GM23248 (cell line): ENCODE measurements at regions of chr6 and their contacts with region 1.

Region 1: DNA sequence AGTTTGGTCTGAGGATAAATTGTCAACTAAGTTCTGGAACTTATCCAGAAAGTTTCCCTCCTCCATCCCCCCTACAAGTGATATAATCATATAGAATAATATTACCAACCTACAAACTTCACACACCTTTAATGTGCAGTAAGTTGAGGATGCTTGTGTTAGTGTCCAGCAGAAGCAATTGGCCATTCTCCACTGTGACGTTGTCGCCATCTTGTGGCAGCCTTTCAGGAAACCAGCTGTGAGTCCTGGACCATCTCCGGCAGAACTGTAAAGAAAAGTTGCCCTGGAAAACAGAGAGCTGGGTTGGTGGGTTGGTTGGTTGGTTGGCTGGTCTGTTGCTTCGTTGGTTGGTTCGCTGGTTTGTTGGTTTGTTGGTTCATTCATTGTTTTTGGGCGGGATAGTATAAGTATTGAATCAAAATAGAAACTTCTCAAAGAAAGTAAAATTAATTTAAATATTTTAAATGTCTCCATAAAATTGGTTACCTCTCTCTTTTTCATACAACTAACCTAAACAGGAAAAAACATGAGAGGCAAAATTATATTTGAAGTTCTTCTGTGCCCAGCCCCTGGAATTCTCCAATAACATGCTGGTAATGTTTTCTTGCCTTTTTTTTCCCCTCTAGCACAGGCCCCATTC is 127.5 kb downstream of the PKHD1 start:
- DNase-seq: peak; percentile 71
- H3K4me3 ChIP-seq: no peak overlapping the region
- H3K27ac ChIP-seq: no peak overlapping the region
- H3K4me1 ChIP-seq: no peaks in the 10 kb centered on the region
- H3K27me3 ChIP-seq: no peaks in the 10 kb centered on the region; the same call in 1 of the 2 replicates

Region 2: GRCh38 chr6:50816115-50816675 is 1143.7 kb before region 1 on chr6:
- in situ Hi-C with region 1: loop called (anchors 10 kb)
- DNase-seq: peak; percentile 80
- H3K4me3 ChIP-seq: peak overlapping the region; percentile 80
- H3K27ac ChIP-seq: no peak overlapping the region
- H3K4me1 ChIP-seq: no peaks in the 10 kb centered on the region
- H3K27me3 ChIP-seq: peaks cover 44% of the 10 kb centered on the region

Region 3: DNA sequence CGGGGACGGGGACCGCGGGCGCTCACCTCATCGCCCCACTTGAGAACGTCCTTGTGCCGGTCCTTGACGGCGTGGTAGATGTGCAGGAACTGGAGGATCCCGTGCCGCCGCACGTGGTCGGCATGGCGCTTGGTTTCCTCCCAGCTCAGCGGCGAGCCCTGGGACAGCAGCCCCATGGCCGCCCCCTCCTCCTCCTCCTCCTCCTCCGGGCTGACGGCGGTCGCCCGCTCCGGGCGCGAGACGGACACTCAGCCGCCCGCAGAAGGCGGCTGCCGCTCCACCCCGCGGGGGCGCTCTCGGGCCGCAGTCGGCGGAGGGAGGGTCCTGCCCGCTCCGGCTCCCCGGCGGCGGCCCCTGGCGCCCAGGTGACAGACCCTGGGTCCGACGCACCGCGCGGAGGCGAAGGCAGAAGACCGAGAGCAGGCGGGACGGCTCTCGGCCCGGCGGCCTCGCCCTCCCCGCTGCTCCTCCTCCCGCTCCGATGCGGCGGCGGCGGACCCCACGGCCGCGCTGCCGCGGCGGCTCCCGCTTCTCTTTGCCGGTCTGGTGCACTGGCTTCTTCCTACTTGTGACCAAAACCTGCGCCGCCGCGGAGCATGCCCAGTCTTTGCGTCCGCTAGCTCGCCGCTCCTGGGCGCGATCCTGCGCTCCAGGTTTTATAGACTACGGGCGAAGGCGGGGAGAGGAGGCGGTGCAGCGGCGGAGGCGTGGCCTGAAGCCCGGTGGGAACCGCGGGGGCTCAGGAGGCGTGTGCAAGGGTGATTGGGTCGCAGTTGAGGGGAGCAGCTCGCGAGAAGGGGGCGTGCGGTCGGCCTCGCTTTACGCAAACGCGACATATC is 1584.8 kb after region 1 on chr6 and contains the start of gene GCLC:
- in situ Hi-C with region 1: no loop called
- DNase-seq: peak; percentile 97
- H3K4me3 ChIP-seq: peak within 1 kb of the TSS; percentile 83
- H3K27ac ChIP-seq: peak within 1 kb of the TSS; percentile 70
- H3K4me1 ChIP-seq: peaks cover 22% of the 10 kb centered on the region
- H3K27me3 ChIP-seq: no peaks in the 10 kb centered on the region
- total RNA-seq, gene GCLC: 6.4 and 8.6 TPM in 2 replicates